ENCODE measurements at regions of chr3 and their contacts with region 1.

Region 1: GRCh38 chr3:183260167-183260904 is 7.3 kb downstream of the B3GNT5 start:
- DNase-seq: no peak
- H3K4me3 ChIP-seq: no peak overlapping the region
- H3K27ac ChIP-seq: no peak overlapping the region
- H3K4me1 ChIP-seq: peaks cover 4 to 26% (median 15%) of the 10 kb centered on the region in 4 experiments; a peak in 6 of 7 replicates
- H3K27me3 ChIP-seq: no peaks in the 10 kb centered on the region; a peak in 1 of 7 replicates
- CTCF ChIP-seq: no peak
- EP300 ChIP-seq: no peak
- POLR2A ChIP-seq: no peak
- RAD21 ChIP-seq: no peak

Region 2: DNA sequence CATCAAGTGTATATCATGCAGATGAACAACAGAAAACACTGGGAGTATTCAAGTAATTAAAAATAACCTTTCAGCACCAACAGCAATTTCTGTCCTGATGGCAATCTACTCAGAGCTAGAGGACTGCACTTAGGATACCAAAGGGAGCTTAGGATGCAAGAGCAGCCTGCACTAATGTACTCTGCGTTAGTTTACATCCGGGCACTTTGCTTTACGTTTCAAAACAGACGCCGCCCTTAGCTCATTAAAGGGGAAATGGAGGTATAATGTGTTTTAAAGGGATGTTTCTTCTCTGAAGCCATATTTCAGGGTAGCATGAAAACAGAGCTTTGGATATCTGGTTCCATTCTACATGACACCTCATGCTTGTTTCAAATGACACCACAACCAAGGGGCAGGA is 21.3 kb before region 1 on chr3:
- CTCF ChIA-PET with region 1: no interaction called
- POLR2A ChIA-PET with region 1: no interaction called
- DNase-seq: no peak
- H3K4me3 ChIP-seq: no peak overlapping the region
- H3K27ac ChIP-seq: no peak overlapping the region
- H3K4me1 ChIP-seq: no peaks in the 10 kb centered on the region
- H3K27me3 ChIP-seq: no peaks in the 10 kb centered on the region
- CTCF ChIP-seq: no peak
- EP300 ChIP-seq: no peak
- POLR2A ChIP-seq: no peak
- RAD21 ChIP-seq: no peak

Region 3: GRCh38 chr3:183385698-183386613 is 125.6 kb after region 1 on chr3:
- CTCF ChIA-PET with region 1: interaction called, 14 read pairs
- POLR2A ChIA-PET with region 1: interaction called, 5 read pairs
- DNase-seq: peak in 1 of 2 experiments; percentile 72
- H3K4me3 ChIP-seq: no peak overlapping the region
- H3K27ac ChIP-seq: no peak overlapping the region
- H3K4me1 ChIP-seq: peaks cover 0 to 19% (median 4%) of the 10 kb centered on the region in 4 experiments; a peak in 3 of 7 replicates
- H3K27me3 ChIP-seq: no peaks in the 10 kb centered on the region
- CTCF ChIP-seq: peak; percentile 5 to 83 (median 74)
- EP300 ChIP-seq: no peak
- POLR2A ChIP-seq: no peak
- RAD21 ChIP-seq: peak; percentile 81 to 88